ENCODE measurements at regions of chr5 and their contacts with region 1.

Region 1: GRCh38 chr5:96125231-96125891 is 163.7 kb upstream of the ELL2 start:
- DNase-seq: no peak
- H3K4me3 Mint-ChIP-seq: no peak overlapping the region
- H3K27ac Mint-ChIP-seq: no peak overlapping the region
- H3K4me1 Mint-ChIP-seq: no peaks in the 10 kb centered on the region
- H3K27me3 Mint-ChIP-seq: no peaks in the 10 kb centered on the region
- CTCF ChIP-seq: no peak

Region 2: GRCh38 chr5:96146675-96147074 is 21.3 kb after region 1 on chr5:
- CTCF ChIA-PET with region 1: interaction called, 8 read pairs
- POLR2A ChIA-PET with region 1: interaction called, 41 read pairs
- intact Hi-C with region 1: no loop called
- DNase-seq: peak; percentile 41
- H3K4me3 Mint-ChIP-seq: no peak overlapping the region
- H3K27ac Mint-ChIP-seq: no peak overlapping the region
- H3K4me1 Mint-ChIP-seq: peaks cover 27% of the 10 kb centered on the region
- H3K27me3 Mint-ChIP-seq: no peaks in the 10 kb centered on the region
- CTCF ChIP-seq: no peak

Measured in MCF 10A (cell line).